Left ventricle myocardium inferior (tissue), 1 donor: ENCODE measurements at regions of chr2 and their contacts with region 1.

Region 1: DNA sequence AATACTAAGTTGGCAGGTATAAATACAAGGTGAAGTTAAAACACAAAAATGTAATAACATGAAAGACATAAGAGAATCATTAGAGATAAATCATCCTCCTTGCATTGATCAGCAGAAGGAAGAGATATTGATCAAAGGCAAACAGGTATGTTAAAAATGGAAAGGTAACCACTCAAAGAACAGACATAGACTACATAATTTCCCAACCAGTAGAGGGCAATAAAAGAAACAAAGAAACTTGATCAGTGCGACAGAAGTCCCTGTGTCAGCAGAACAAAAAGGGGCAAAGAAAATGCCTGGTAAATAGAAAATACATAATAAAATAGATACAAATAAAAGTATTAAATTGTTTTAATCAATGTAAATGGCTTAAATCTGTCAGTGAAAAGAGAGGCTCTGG is 53.6 kb downstream of the FAM228A start:
- DNase-seq: no peak
- H3K4me3 ChIP-seq: no peak overlapping the region
- H3K27ac ChIP-seq: no peak overlapping the region
- H3K4me1 ChIP-seq: no peaks in the 10 kb centered on the region
- H3K27me3 ChIP-seq: no peaks in the 10 kb centered on the region
- CTCF ChIP-seq: peak; percentile 54

Region 2: DNA sequence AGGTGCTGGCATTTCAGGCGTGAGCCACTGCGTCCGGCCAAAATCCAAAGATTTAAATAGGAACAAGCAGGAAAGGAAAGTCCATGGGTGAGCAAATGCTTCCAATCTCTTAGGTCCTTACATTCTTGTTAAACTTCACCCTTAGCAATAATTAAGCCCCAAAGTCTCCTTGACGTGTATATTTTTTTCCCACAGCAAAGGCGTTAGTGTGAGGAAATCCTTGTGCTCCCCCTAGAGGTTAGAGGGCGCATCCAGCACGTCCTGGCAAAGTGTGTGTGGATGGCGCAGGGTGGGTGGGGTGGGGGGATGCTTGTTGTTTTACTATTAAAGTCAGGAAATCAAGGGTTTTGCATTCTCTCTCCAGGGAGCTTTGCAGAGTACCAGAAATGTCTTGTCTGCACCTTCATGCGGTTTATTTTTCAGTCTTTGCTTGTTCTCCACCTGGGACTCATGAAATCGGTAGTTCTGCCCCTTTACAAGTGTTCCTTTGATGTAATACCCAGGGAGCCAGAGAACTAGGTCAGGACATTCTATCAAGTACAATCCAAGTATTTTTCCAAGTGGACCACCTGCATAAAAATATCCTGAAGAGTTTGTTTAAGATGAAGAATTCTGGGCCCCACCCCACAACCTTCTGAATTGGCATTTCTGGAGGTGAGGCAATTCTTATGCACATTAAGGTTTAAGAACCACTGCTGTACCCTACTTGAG is 154.0 kb after region 1 on chr2:
- intact Hi-C with region 1: loop called (anchors 10 kb)
- DNase-seq: peak; percentile 44
- H3K4me3 ChIP-seq: no peak overlapping the region
- H3K27ac ChIP-seq: no peak overlapping the region
- H3K4me1 ChIP-seq: no peaks in the 10 kb centered on the region
- H3K27me3 ChIP-seq: no peaks in the 10 kb centered on the region
- CTCF ChIP-seq: peak; percentile 84